B cell (primary cell): ENCODE measurements at regions of chr3 and their contacts with region 1.

Region 1: GRCh38 chr3:183576487-183577107 is 21.1 kb upstream of the KLHL6 start:
- DNase-seq: peak; percentile 58
- ATAC-seq: peak; percentile 42
- H3K4me3 ChIP-seq: no peak overlapping the region
- H3K4me3 Mint-ChIP-seq: no peak overlapping the region
- H3K27ac ChIP-seq: no peak overlapping the region
- H3K27ac Mint-ChIP-seq: no peak overlapping the region
- H3K4me1 ChIP-seq: peaks cover 9 to 44% of the 10 kb centered on the region in 2 donors
- H3K4me1 Mint-ChIP-seq: peaks cover 55% of the 10 kb centered on the region
- H3K27me3 ChIP-seq: peaks cover 0 to 16% (median 5%) of the 10 kb centered on the region in 4 experiments
- H3K27me3 Mint-ChIP-seq: peaks cover 16% of the 10 kb centered on the region
- CTCF ChIP-seq: no peak

Region 2: GRCh38 chr3:183591881-183592521 is 15.4 kb after region 1 on chr3:
- CTCF ChIA-PET with region 1: interaction called, 8 read pairs
- POLR2A ChIA-PET with region 1: interaction called, 11 read pairs
- intact Hi-C with region 1: no loop called
- DNase-seq: peak; percentile 77
- ATAC-seq: peak; percentile 76
- H3K4me3 ChIP-seq: peak overlapping the region in 1 of 5 experiments; percentile 16
- H3K4me3 Mint-ChIP-seq: peak overlapping the region; percentile 56
- H3K27ac ChIP-seq: no peak overlapping the region
- H3K27ac Mint-ChIP-seq: peak overlapping the region; percentile 15
- H3K4me1 ChIP-seq: peaks cover 32 to 49% of the 10 kb centered on the region in 2 donors
- H3K4me1 Mint-ChIP-seq: peaks cover 47% of the 10 kb centered on the region
- H3K27me3 ChIP-seq: peaks cover 0 to 28% (median 5%) of the 10 kb centered on the region in 4 experiments
- H3K27me3 Mint-ChIP-seq: peaks cover 15% of the 10 kb centered on the region
- CTCF ChIP-seq: peak; percentile 71

Region 3: GRCh38 chr3:183904833-183905780 is 328.5 kb after region 1 on chr3:
- CTCF ChIA-PET with region 1: no interaction called
- POLR2A ChIA-PET with region 1: no interaction called
- intact Hi-C with region 1: no loop called
- DNase-seq: no peak
- ATAC-seq: no peak
- H3K4me3 ChIP-seq: no peak overlapping the region
- H3K4me3 Mint-ChIP-seq: no peak overlapping the region
- H3K27ac ChIP-seq: no peak overlapping the region
- H3K27ac Mint-ChIP-seq: no peak overlapping the region
- H3K4me1 ChIP-seq: no peaks in the 10 kb centered on the region
- H3K4me1 Mint-ChIP-seq: no peaks in the 10 kb centered on the region
- H3K27me3 ChIP-seq: peaks cover 0 to 2% (median 0%) of the 10 kb centered on the region in 4 experiments
- H3K27me3 Mint-ChIP-seq: peaks cover 17% of the 10 kb centered on the region
- CTCF ChIP-seq: no peak